ENCODE measurements at regions of chr3 and their contacts with region 1.

Region 1: GRCh38 chr3:138915503-138916498 is 31.1 kb downstream of the FOXL2 start:
- DNase-seq: peak; percentile 89
- H3K4me3 Mint-ChIP-seq: peak overlapping the region; percentile 81
- H3K27ac Mint-ChIP-seq: peak overlapping the region; percentile 24
- H3K4me1 Mint-ChIP-seq: peaks cover 4% of the 10 kb centered on the region
- H3K27me3 Mint-ChIP-seq: no peaks in the 10 kb centered on the region

Region 2: GRCh38 chr3:138417559-138417982 is 498.2 kb before region 1 on chr3:
- CTCF ChIA-PET with region 1: interaction called, 23 read pairs
- intact Hi-C with region 1: loop called (anchors 1 kb)
- DNase-seq: peak; percentile 86
- H3K4me3 Mint-ChIP-seq: no peak overlapping the region
- H3K27ac Mint-ChIP-seq: no peak overlapping the region
- H3K4me1 Mint-ChIP-seq: peaks cover 4% of the 10 kb centered on the region
- H3K27me3 Mint-ChIP-seq: peaks cover 6% of the 10 kb centered on the region

Region 3: GRCh38 chr3:138594150-138594934 is 321.5 kb before region 1 on chr3 and contains the start of gene CEP70:
- CTCF ChIA-PET with region 1: interaction called, 192 read pairs
- intact Hi-C with region 1: loop called (anchors 1 kb)
- DNase-seq: peak; percentile 90
- H3K4me3 Mint-ChIP-seq: peak within 1 kb of the TSS; percentile 96
- H3K27ac Mint-ChIP-seq: peak within 1 kb of the TSS; percentile 87
- H3K4me1 Mint-ChIP-seq: peaks cover 4% of the 10 kb centered on the region
- H3K27me3 Mint-ChIP-seq: no peaks in the 10 kb centered on the region
- total RNA-seq, gene CEP70: 16.3 to 20.4 TPM

Region 4: DNA sequence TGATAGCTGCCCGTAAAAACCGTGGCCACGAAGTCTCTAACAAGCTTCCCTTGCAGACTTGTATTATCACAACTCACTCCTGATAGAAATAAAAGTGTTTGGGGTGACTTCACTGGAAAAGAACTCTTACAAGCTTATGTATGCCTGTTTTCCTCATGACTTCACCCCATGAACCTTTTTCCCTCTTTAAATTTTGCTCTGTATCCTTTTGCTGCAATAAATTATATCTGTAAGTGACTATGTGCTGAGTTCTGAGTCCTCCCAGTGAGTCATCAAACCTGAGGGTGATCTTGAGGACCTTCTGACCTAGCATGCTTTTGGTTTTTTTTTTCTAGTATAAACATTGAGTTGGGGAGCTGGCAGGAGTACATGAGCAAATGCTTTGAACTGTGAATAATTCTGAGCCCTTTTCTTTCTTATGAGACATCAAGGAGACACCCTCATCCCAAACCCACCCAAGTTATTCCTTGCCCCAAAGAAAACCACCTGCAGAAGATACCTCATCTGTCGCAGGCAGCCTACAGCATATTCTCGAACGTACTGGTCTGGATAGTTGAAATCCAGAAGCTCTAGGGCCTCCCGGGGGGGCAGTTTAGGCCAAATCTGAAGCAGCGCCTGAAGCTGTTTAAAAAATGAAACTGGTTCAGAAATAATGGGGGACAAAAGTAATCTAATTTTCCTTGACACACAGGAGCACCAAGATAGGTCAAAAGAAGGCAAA is 221.4 kb before region 1 on chr3:
- CTCF ChIA-PET with region 1: interaction called, 86 read pairs
- intact Hi-C with region 1: loop called (anchors 1 kb)
- DNase-seq: no peak
- H3K4me3 Mint-ChIP-seq: no peak overlapping the region
- H3K27ac Mint-ChIP-seq: no peak overlapping the region
- H3K4me1 Mint-ChIP-seq: peaks cover 3% of the 10 kb centered on the region
- H3K27me3 Mint-ChIP-seq: no peaks in the 10 kb centered on the region

Region 5: DNA sequence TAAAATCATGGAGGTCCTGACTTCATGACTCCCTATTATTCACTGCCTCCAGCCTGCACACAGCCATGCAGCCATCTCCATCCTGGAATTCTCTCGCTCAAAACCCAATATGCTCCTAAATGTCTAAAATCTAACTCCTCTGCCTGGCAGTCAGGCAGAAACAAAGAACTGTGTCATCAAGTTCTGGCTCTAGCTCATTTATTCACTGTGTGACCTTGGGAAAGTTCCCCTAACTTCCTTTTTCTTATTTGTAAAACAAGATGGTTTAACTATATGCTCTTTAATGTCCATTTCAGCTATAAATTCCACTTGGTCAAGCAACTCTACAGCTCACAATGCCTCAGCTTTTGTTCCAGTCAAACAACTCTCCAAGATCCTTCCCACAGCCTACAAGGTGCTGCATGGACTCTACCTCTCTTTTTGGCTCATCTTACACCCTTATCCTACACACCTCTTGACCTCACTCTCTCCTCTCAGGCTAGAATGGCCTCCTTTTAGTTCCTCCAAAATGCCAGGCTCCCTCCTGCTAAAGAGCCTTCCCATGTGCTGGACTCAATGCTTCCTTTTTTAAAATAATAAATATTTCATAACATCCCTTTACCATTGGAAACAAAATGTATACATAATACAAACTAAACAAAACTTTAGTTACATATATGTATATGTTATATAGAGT is 97.5 kb before region 1 on chr3:
- CTCF ChIA-PET with region 1: interaction called, 12 read pairs
- intact Hi-C with region 1: no loop called
- DNase-seq: no peak
- H3K4me3 Mint-ChIP-seq: no peak overlapping the region
- H3K27ac Mint-ChIP-seq: peak overlapping the region; percentile 32
- H3K4me1 Mint-ChIP-seq: peaks cover 40% of the 10 kb centered on the region
- H3K27me3 Mint-ChIP-seq: no peaks in the 10 kb centered on the region

Region 6: DNA sequence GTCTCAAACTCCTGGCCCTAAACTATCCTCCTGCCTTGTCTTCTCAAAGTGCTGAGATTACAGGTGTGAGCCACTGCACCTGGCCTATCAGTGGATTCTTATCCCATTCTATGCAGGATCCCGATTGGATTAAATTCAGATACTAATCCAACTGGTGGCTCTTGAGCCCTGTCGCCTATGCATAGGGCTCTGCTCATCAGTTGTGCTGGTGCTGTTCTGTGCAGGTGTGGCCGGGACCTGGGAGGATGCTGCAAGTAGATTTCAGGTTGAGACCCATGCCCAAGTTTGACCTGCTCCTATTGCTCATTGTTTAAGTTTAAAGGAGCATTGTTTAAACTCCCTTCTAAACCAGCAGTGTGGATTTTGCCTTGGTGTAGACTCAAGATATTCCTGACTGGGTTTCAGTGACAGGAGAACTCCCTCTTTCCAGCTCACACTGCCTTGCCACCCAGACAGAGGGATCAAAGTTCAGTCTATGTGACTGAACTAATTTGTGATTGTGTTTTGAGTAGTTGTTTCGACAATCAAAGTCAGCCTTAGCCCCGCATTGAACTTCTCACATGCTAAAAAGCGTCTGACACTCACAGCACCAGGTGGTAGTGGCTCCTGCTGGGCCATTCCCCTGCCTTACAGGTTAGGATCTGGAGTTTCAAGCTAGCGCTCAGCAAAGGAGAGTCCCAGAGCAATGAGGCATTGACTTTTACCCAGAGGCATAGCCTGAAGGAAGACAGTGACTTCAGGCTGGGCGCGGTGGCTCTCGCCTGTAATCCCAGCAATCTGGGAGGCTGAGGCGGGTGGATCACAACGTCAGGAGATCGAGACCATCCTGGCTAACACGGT is 36.0 kb before region 1 on chr3:
- CTCF ChIA-PET with region 1: interaction called, 11 read pairs
- intact Hi-C with region 1: no loop called
- DNase-seq: no peak
- H3K4me3 Mint-ChIP-seq: no peak overlapping the region
- H3K27ac Mint-ChIP-seq: no peak overlapping the region
- H3K4me1 Mint-ChIP-seq: peaks cover 4% of the 10 kb centered on the region
- H3K27me3 Mint-ChIP-seq: no peaks in the 10 kb centered on the region